ENCODE measurements at regions of chr16 and their contacts with region 1.

Region 1: DNA sequence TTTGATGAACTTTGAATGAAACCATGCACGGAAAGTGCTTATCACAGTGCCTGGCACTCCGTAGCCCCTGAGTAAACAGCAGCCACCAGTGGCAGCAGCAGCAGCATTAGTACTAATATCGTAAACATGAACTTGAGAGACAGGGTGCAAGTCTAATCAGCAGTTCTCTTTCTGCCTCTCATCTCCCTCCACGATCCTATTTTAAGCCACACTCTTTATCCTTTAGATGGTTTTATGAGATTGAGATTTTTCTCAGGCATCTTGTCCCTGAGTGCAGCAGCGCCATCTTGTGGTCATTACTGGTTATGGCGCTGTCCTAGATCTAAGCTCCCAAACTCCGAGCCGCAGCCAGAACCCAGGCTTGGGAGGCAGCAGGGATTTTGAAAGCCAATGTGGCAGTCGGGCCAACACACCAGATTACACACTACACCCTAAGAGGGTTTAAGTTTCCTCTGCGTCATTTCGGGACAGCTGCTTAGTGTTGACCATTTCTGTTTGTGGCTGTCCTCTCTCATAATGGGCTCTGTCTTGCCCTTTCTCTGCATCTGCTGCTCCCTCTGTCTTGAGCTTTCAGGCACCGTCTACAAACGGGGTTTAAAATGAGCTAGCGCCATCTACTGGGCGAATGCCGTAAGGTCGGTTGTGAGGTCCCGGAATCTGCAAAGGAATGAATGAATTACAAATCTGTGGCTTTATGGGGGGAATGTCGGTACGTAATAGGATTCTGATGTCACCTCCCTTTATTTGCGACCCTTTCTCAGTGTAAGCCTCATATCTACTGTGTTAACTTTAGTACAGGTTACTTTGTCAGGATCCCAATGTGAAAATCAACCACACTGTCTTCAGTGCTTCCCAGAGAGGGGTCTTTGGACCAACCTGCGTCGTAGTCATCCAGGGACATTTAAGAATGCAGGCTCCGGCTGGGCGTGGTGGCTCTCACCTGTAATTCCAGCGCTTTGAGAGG is 64.5 kb downstream of the CYLD start:
- DNase-seq: peak; percentile 91
- ATAC-seq: peak; percentile 92
- H3K4me3 Mint-ChIP-seq: peak overlapping the region; percentile 66
- H3K27ac Mint-ChIP-seq: peak overlapping the region; percentile 70
- H3K4me1 Mint-ChIP-seq: peaks cover 13% of the 10 kb centered on the region
- H3K27me3 Mint-ChIP-seq: no peaks in the 10 kb centered on the region
- CTCF ChIP-seq: peak; percentile 98

Region 2: DNA sequence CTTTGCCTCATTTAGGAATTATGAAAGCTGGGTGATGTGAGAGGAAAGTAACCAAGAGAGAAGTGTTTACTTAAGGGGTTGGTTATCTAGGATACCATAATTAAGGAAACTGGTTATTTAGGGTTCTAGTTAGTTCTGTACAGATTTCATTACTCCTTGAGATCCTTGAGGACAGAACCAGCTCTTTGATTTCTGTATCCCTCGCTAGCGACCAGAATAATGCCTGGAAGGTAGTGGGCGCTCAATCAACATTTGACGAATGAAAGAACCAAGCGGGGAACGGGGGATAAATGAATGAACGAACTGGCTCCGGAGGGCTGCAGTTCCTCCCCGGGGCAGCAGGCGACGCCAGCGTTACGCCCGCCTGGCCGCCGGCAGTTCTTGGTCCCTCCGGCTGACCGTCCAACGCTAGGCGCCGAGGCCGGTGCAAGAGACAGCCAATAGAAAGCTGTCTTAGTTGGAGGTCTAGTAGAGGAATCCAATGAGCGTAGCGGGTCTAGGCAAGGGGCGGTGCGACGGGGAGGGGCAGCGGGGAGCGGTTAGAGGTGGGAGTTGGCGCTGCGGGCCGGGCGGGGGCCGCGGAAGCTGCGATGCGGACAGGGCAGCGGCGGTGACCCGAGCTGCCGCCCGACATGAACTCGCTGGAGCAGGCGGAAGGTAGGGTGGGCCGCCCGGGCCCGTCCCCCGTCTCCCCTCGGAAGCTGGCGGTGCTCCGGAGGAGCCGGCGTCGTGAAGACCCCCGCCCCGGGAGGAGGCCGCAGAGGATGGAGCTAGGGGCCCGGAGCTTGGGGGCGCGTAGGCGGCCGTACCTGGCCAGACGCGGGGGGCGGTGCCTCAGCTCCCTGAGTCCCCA is 781.5 kb before region 1 on chr16 and contains the start of gene CNEP1R1:
- CTCF ChIA-PET with region 1: interaction called, 14 read pairs
- POLR2A ChIA-PET with region 1: no interaction called
- intact Hi-C with region 1: no loop called
- DNase-seq: peak; percentile 94
- ATAC-seq: peak; percentile 97
- H3K4me3 Mint-ChIP-seq: peak within 1 kb of the TSS; percentile 92
- H3K27ac Mint-ChIP-seq: peak within 1 kb of the TSS; percentile 86
- H3K4me1 Mint-ChIP-seq: peaks cover 22% of the 10 kb centered on the region
- H3K27me3 Mint-ChIP-seq: no peaks in the 10 kb centered on the region
- CTCF ChIP-seq: peak; percentile 98
- total RNA-seq, gene CNEP1R1: 19.1 to 19.9 TPM

Region 3: DNA sequence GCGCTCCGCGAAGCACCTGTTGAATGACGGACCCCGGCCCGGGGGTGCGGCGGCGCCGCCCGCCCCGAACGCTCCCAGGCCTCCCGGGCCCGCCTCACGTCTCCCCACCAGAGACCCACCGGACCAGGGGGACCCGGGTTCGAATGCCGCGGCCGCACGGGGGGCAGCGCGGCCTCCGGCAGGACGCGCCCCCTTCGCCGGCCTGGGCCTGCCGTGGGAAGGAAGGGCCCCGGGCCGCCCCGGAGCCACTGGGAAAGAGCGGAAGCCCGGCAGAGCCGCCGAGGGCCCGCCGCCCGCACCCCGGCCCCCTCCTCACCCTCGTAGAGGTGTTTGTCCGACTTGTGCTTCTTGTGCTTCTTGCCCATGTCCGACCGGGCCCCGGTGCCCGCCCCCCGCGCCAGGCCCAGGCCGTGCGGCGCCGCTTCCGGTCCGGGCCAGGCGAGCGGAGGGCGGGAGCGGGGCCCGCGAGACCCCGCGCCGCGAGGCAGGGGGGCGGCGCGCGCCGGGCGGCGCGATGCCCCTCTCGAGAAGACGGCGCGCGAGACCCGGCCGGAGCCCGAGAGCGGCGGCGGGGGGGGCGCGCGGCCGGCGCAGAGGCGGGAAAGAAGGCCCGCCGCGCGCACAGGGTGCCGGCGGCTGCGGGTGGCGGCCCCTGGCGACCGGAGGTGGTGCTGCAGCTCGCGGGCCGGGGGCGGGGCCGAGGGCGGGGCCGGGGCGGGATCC is 437.8 kb before region 1 on chr16 and contains the start of gene BRD7:
- CTCF ChIA-PET with region 1: interaction called, 16 read pairs
- POLR2A ChIA-PET with region 1: no interaction called
- intact Hi-C with region 1: no loop called
- DNase-seq: peak; percentile 65
- ATAC-seq: peak; percentile 91
- H3K4me3 Mint-ChIP-seq: peak within 1 kb of the TSS; percentile 93
- H3K27ac Mint-ChIP-seq: peak within 1 kb of the TSS; percentile 92
- H3K4me1 Mint-ChIP-seq: peaks cover 36% of the 10 kb centered on the region
- H3K27me3 Mint-ChIP-seq: no peaks in the 10 kb centered on the region
- CTCF ChIP-seq: no peak
- total RNA-seq, gene BRD7: 76.2 to 93.4 TPM

Region 4: DNA sequence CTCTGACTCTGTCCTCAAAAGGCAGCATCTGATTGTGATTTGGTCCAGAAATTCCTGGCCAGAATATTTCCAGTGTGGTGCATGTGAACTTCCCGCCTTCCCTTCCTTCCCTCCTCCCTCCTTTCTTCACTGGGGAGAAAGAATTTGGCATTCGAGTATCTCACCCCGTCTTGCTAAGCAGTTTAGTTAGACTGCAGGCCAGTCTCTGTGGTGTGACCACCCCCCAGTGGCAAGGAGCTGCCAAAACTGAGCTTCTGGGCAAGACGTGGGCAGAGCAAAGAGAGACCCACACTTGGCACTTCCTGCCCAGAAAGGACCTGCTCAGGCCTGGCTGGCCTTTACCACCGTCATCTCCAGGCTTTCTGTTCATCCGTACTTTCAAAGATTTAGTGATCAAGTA is 161.7 kb before region 1 on chr16:
- CTCF ChIA-PET with region 1: interaction called, 10 read pairs
- POLR2A ChIA-PET with region 1: no interaction called
- intact Hi-C with region 1: no loop called
- DNase-seq: peak; percentile 74
- ATAC-seq: peak; percentile 88
- H3K4me3 Mint-ChIP-seq: no peak overlapping the region
- H3K27ac Mint-ChIP-seq: no peak overlapping the region
- H3K4me1 Mint-ChIP-seq: peaks cover 5% of the 10 kb centered on the region
- H3K27me3 Mint-ChIP-seq: no peaks in the 10 kb centered on the region
- CTCF ChIP-seq: peak; percentile 37

Region 5: DNA sequence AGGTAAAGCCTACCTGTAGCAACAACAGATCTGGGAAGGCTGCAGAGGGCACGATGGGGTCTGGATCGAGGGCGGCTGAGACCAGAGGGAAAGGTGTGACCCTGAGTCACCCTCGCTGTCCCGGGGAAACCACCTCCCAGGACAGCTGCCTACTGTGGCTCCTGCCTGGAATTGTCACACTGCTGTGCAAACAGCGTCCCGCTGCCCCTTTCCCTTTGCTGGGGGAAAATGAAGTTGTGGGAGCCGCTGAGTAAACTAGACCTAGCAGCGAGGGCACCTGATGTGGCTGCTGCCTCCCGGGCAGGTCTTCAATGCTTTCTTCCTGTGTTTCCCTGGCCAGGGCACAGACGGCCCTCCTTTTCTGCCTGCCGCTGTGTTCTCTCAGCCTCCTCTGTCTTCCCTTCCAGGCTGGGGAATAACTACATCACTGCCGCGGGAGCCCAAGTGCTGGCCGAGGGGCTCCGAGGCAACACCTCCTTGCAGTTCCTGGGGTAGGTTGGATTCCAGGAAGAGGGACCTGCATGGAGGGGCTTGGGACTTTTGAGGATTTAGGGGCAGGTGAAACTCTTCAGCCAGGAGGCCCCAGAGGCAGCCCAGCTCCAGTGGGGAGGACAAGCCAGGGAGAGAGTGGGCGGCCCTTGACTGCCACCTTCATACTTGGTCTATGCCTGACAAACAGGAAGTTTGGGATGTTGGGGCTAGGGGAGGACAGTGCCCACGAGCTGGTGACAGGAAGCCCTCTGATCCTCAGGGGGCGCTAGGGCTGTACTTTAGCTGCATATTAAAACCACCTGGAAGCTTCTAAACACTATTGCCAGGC is 86.7 kb before region 1 on chr16:
- CTCF ChIA-PET with region 1: interaction called, 10 read pairs
- POLR2A ChIA-PET with region 1: interaction called, 3 read pairs
- intact Hi-C with region 1: no loop called
- DNase-seq: peak; percentile 53
- ATAC-seq: peak; percentile 57
- H3K4me3 Mint-ChIP-seq: no peak overlapping the region
- H3K27ac Mint-ChIP-seq: no peak overlapping the region
- H3K4me1 Mint-ChIP-seq: peaks cover 38% of the 10 kb centered on the region
- H3K27me3 Mint-ChIP-seq: no peaks in the 10 kb centered on the region
- CTCF ChIP-seq: peak; percentile 52

Region 6: GRCh38 chr16:50756473-50756872 is 49.9 kb before region 1 on chr16:
- CTCF ChIA-PET with region 1: interaction called, 78 read pairs
- POLR2A ChIA-PET with region 1: no interaction called
- intact Hi-C with region 1: no loop called
- DNase-seq: no peak
- ATAC-seq: no peak
- H3K4me3 Mint-ChIP-seq: no peak overlapping the region
- H3K27ac Mint-ChIP-seq: no peak overlapping the region
- H3K4me1 Mint-ChIP-seq: peaks cover 65% of the 10 kb centered on the region
- H3K27me3 Mint-ChIP-seq: no peaks in the 10 kb centered on the region
- CTCF ChIP-seq: no peak

Region 7: DNA sequence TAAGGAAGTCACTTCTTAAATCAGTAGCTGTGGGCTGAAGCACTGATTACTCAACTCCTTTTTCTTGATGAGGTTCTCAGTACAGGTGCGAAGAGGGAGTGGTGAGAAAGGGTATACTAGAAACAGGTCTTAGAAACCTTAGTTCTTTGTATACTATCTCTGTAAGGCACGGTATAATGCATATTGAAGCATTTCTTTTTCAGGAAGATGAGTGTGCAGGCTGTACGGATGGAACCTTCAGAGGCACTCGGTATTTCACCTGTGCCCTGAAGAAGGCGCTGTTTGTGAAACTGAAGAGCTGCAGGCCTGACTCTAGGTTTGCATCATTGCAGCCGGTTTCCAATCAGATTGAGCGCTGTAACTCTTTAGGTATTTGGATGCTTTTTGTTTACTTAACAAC is 25.3 kb before region 1 on chr16:
- CTCF ChIA-PET with region 1: interaction called, 60 read pairs
- POLR2A ChIA-PET with region 1: no interaction called
- intact Hi-C with region 1: no loop called
- DNase-seq: peak; percentile 24
- ATAC-seq: peak; percentile 43
- H3K4me3 Mint-ChIP-seq: no peak overlapping the region
- H3K27ac Mint-ChIP-seq: peak overlapping the region; percentile 77
- H3K4me1 Mint-ChIP-seq: peaks cover 55% of the 10 kb centered on the region
- H3K27me3 Mint-ChIP-seq: no peaks in the 10 kb centered on the region
- CTCF ChIP-seq: peak; percentile 30

Measured in activated CD8-positive, alpha-beta T cell treated with anti-CD3 and anti-CD28 coated beads for 36 hours (primary cell).